Activated T-helper 2 cell treated with anti-CD3 and anti-CD28 coated beads, Interferon-gamma antibody, Interleukin-2, Interleukin-4, amounts not matched to agents 10 μg/mL and 5 μg/mL and 100 μg/mL, durations not matched to agents 14 hours and 24 hours and 36 hours (primary cell): ENCODE measurements at regions of chr11 and their contacts with region 1.

Region 1: GRCh38 chr11:81644239-81644840 is 1089.3 kb downstream of the FAM181B start:
- DNase-seq: no peak
- H3K4me3 Mint-ChIP-seq: no peak overlapping the region
- H3K27ac Mint-ChIP-seq: no peak overlapping the region
- H3K4me1 Mint-ChIP-seq: no peaks in the 10 kb centered on the region
- H3K27me3 Mint-ChIP-seq: peaks cover 14% of the 10 kb centered on the region

Region 2: DNA sequence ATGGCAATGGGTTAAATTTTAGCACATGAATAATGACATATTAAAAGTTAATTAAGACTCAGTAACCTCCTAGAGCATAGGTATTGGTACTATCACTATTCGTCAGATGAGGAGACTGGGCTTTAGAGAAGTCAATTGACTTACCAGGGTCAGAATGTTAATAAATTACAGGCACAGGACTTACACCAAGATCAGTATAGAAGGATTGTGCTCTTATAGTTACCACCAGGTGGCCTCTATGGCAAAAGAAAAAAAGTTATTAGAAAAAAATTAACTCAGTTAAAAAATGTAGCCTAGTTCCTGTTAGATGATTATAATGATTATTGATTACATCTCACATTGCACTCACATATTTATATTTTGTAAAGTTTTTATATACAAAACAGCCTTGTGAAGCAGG is 74.3 kb before region 1 on chr11:
- intact Hi-C with region 1: no loop called
- DNase-seq: no peak
- H3K4me3 Mint-ChIP-seq: no peak overlapping the region
- H3K27ac Mint-ChIP-seq: no peak overlapping the region
- H3K4me1 Mint-ChIP-seq: no peaks in the 10 kb centered on the region
- H3K27me3 Mint-ChIP-seq: no peaks in the 10 kb centered on the region

Region 3: GRCh38 chr11:81717695-81718094 is 73.4 kb after region 1 on chr11:
- intact Hi-C with region 1: no loop called
- DNase-seq: no peak
- H3K4me3 Mint-ChIP-seq: no peak overlapping the region
- H3K27ac Mint-ChIP-seq: no peak overlapping the region
- H3K4me1 Mint-ChIP-seq: no peaks in the 10 kb centered on the region
- H3K27me3 Mint-ChIP-seq: no peaks in the 10 kb centered on the region

Region 4: GRCh38 chr11:82038153-82038552 is 393.8 kb after region 1 on chr11:
- intact Hi-C with region 1: loop called (anchors 5 kb)
- DNase-seq: no peak
- H3K4me3 Mint-ChIP-seq: no peak overlapping the region
- H3K27ac Mint-ChIP-seq: no peak overlapping the region
- H3K4me1 Mint-ChIP-seq: no peaks in the 10 kb centered on the region
- H3K27me3 Mint-ChIP-seq: no peaks in the 10 kb centered on the region

Region 5: GRCh38 chr11:82229341-82229740 is 585.0 kb after region 1 on chr11:
- intact Hi-C with region 1: loop called (anchors 1 kb)
- DNase-seq: no peak
- H3K4me3 Mint-ChIP-seq: no peak overlapping the region
- H3K27ac Mint-ChIP-seq: no peak overlapping the region
- H3K4me1 Mint-ChIP-seq: no peaks in the 10 kb centered on the region
- H3K27me3 Mint-ChIP-seq: no peaks in the 10 kb centered on the region

Region 6: DNA sequence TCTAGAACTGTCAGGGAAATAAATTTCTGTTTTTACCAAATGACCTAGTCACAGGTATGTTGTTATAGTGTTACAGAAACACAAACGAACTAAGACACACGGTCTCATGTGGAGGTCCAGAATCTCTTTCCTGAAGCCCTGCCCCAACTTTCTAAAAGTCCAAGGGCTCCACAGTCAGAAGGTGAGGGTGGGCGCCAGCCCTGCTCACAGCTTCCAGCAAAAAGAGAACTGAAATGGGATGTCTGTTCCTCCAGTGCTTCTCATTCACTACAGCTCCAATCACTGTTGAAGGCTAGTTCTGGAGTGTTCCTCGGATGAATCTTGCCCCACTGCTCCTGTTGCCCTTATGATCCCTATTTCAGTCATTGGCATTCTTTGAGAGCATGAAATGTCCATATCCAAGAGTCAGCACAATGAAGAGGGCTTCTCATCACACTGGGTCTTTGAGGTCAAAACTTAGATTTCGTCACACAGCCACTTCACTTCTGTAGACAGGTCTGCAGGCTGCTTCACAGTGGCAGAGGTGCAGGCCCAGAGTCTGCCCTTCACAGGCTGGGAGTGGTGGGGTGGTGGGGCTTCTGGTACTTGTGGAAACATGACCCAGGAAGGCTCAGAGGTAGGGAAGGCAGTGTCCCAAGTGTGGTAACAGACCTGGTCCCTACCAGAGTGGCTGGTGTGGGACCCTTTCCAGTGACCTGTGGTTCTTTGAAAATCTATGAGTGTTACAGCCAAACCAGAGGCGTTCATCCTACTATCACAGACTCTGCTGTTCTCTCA is 1054.4 kb after region 1 on chr11:
- intact Hi-C with region 1: loop called (anchors 5 kb)
- DNase-seq: no peak
- H3K4me3 Mint-ChIP-seq: no peak overlapping the region
- H3K27ac Mint-ChIP-seq: no peak overlapping the region
- H3K4me1 Mint-ChIP-seq: no peaks in the 10 kb centered on the region
- H3K27me3 Mint-ChIP-seq: peaks cover 6% of the 10 kb centered on the region